ENCODE measurements at regions of chr2 and their contacts with region 1.

Region 1: DNA sequence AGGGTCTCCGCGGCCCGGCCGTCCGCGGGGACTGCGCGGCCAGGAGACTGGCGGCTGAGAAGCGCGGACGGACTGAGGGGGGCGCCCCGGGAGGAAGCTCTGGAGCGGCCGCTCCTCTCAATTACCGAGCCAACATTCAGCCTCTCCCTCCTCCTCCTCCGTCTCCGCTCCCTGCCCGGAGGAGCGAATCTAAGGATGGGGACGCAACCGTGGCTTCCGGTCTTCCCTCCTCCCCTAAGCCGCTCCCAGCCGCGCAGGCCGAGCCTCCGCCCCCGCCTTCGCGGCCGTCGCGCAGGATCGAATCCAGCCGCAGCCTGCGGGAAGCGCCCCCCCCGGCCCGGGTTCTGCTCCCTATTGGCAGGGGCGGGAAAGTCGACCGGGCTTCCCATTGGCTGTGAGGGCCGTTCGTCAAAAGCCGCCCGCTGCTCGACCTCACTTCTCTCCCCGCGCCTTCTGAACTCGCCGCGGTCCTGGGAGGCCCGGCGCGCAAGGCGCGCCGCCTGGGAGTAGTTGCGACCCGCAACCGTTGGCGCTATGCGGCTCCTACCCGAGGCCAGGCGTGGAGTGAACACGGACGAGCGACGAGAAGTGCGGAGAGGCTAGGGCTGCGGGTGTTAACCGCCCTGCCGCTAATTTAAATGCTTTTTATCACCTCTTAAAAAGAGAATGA is at the start of gene HNRNPLL:
- DNase-seq: peak; percentile 97
- ATAC-seq: peak; percentile 93
- H3K4me3 ChIP-seq: peak within 1 kb of the TSS; percentile 85
- H3K27ac ChIP-seq: peak within 1 kb of the TSS; percentile 98
- H3K4me1 ChIP-seq: peaks cover 10% of the 10 kb centered on the region
- H3K27me3 ChIP-seq: no peaks in the 10 kb centered on the region
- CTCF ChIP-seq: no peak; the same call in 1 of the 2 replicates
- POLR2A ChIP-seq: peak; percentile 96
- RAD21 ChIP-seq: no peak
- total RNA-seq, gene HNRNPLL: 49.2 and 53.1 TPM in 2 replicates

Region 2: GRCh38 chr2:38581193-38582147 is 21.4 kb before region 1 on chr2:
- CTCF ChIA-PET with region 1: interaction called, 10 read pairs
- POLR2A ChIA-PET with region 1: no interaction called
- dilution Hi-C with region 1: no loop called
- in situ Hi-C with region 1: no loop called
- intact Hi-C with region 1: loop called (anchors 2 kb)
- DNase-seq: peak; percentile 82
- ATAC-seq: peak; percentile 75
- H3K4me3 ChIP-seq: no peak overlapping the region
- H3K27ac ChIP-seq: no peak overlapping the region
- H3K4me1 ChIP-seq: peaks cover 5% of the 10 kb centered on the region
- H3K27me3 ChIP-seq: no peaks in the 10 kb centered on the region
- CTCF ChIP-seq: peak; percentile 79
- POLR2A ChIP-seq: no peak
- RAD21 ChIP-seq: peak; percentile 83

Region 3: GRCh38 chr2:38665854-38666555 is 63.1 kb after region 1 on chr2 and contains the start of gene GALM:
- CTCF ChIA-PET with region 1: no interaction called
- POLR2A ChIA-PET with region 1: no interaction called
- dilution Hi-C with region 1: no loop called
- in situ Hi-C with region 1: no loop called
- intact Hi-C with region 1: loop called (anchors 1 kb)
- DNase-seq: peak; percentile 96
- ATAC-seq: peak; percentile 95
- H3K4me3 ChIP-seq: peak within 1 kb of the TSS; percentile 68
- H3K27ac ChIP-seq: peak within 1 kb of the TSS; percentile 60
- H3K4me1 ChIP-seq: no peaks in the 10 kb centered on the region; the same call in 1 of the 2 replicates
- H3K27me3 ChIP-seq: no peaks in the 10 kb centered on the region
- CTCF ChIP-seq: no peak
- POLR2A ChIP-seq: no peak
- RAD21 ChIP-seq: no peak
- total RNA-seq, gene GALM: 16.4 and 24.2 TPM in 2 replicates

Region 4: GRCh38 chr2:38720613-38721241 is 117.9 kb after region 1 on chr2:
- CTCF ChIA-PET with region 1: interaction called, 6 read pairs
- POLR2A ChIA-PET with region 1: no interaction called
- dilution Hi-C with region 1: no loop called
- in situ Hi-C with region 1: loop called (anchors 5 kb)
- intact Hi-C with region 1: no loop called
- DNase-seq: peak; percentile 98
- ATAC-seq: peak; percentile 74
- H3K4me3 ChIP-seq: no peak overlapping the region
- H3K27ac ChIP-seq: peak overlapping the region; percentile 2; the same call in 1 of the 2 replicates
- H3K4me1 ChIP-seq: peaks cover 7% of the 10 kb centered on the region
- H3K27me3 ChIP-seq: no peaks in the 10 kb centered on the region
- CTCF ChIP-seq: no peak
- POLR2A ChIP-seq: no peak
- RAD21 ChIP-seq: no peak

Measured in IMR-90 (cell line).